ENCODE measurements at regions of chr4 and their contacts with region 1.

Region 1: GRCh38 chr4:87006676-87007527 is 72.1 kb downstream of the AFF1 start:
- DNase-seq: peak; percentile 95
- H3K4me3 ChIP-seq: peak overlapping the region; percentile 81 to 88
- H3K27ac ChIP-seq: peak overlapping the region; percentile 92 to 95
- H3K4me1 ChIP-seq: peaks cover 23% of the 10 kb centered on the region
- H3K27me3 ChIP-seq: no peaks in the 10 kb centered on the region
- CTCF ChIP-seq: peak in 2 of 3 experiments; percentile 13 to 35
- POLR2A ChIP-seq: peak; percentile 37

Region 2: GRCh38 chr4:86704601-86705000 is 302.3 kb before region 1 on chr4:
- intact Hi-C with region 1: no loop called
- DNase-seq: no peak
- H3K4me3 ChIP-seq: no peak overlapping the region
- H3K27ac ChIP-seq: no peak overlapping the region
- H3K4me1 ChIP-seq: no peaks in the 10 kb centered on the region
- H3K27me3 ChIP-seq: no peaks in the 10 kb centered on the region
- CTCF ChIP-seq: no peak
- POLR2A ChIP-seq: no peak

Region 3: DNA sequence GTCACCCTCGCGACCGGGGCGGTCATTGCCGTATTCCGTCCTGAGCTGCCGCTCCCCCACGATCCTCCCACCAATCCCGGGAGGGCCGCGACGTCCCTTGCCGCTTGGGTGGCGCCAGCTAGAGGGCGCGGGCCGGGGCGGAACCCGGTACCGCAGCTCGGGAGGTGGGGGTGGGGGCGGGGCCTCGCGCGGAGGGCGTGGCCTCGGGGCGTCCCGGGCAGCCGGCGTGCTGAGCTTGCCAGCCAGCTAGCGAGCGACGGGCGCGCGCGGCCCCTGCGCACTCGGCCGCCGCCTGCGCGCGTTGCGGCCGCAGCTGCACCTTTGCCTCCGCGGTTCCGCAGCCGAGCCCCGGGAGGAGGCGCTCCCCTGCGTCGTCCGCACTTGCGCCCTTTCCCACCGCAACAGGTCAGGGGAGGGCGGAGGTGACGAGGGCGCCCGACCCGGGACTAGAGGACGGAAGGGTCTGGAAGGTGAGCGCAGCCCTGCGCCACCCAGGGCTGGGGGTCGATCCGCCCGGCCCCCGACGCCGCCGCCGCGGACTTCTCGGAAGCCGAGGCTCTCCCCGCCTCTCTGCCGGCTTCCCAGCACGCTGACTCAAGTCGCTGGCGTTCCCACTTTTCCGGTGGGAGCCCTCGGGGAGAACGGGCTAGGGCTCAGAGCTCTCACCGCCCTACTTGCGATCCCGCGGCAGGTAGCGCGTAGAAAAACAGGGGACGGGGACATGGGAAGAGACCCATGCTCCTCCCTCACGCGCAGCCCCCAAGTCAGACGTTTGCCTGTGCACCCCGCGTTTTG is 71.9 kb before region 1 on chr4 and contains the start of gene AFF1:
- intact Hi-C with region 1: loop called (anchors 10 kb)
- DNase-seq: peak; percentile 90
- H3K4me3 ChIP-seq: peak within 1 kb of the TSS; percentile 87 to 96
- H3K27ac ChIP-seq: peak within 1 kb of the TSS; percentile 86 to 91
- H3K4me1 ChIP-seq: peaks cover 8% of the 10 kb centered on the region
- H3K27me3 ChIP-seq: no peaks in the 10 kb centered on the region
- CTCF ChIP-seq: peak; percentile 38 to 41 (median 39)
- POLR2A ChIP-seq: peak; percentile 2
- total RNA-seq, gene AFF1: 53.6 to 56.8 TPM

Region 4: DNA sequence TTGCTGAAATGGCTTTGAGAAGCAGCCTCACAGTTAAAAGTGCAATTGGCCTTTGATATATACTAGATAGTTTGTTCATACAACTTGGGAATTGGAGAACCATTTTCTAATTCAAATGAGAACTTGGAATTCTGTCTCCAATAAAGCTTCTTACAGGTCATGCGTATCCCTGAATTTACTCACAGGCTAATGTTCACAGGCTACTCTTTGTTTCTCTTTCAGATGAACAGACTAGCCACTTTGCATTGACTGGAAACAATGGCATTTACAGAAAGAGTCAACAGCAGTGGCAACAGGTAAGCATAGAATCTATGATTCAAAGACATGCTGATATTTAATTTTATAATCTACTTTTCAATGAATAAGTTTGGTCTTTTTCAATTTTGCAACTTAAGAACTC is 58.6 kb before region 1 on chr4:
- intact Hi-C with region 1: no loop called
- DNase-seq: no peak
- H3K4me3 ChIP-seq: no peak overlapping the region
- H3K27ac ChIP-seq: no peak overlapping the region
- H3K4me1 ChIP-seq: peaks cover 6% of the 10 kb centered on the region
- H3K27me3 ChIP-seq: no peaks in the 10 kb centered on the region
- CTCF ChIP-seq: no peak
- POLR2A ChIP-seq: no peak

Measured in testis (tissue), 5 donors.